Panc1 (cell line): ENCODE measurements at regions of chr12 and their contacts with region 1.

Region 1: GRCh38 chr12:53852061-53852460 is 86.6 kb upstream of the HOXC13 start:
- DNase-seq: no peak
- ATAC-seq: no peak
- H3K4me3 ChIP-seq: no peak overlapping the region
- H3K27ac ChIP-seq: peak overlapping the region; percentile 61; the same call in 1 of the 2 replicates
- H3K4me1 ChIP-seq: peaks cover 11% of the 10 kb centered on the region
- H3K27me3 ChIP-seq: no peaks in the 10 kb centered on the region
- CTCF ChIP-seq: no peak

Region 2: GRCh38 chr12:53907103-53907502 is 55.0 kb after region 1 on chr12:
- CTCF ChIA-PET with region 1: no interaction called
- POLR2A ChIA-PET with region 1: interaction called, 18 read pairs
- in situ Hi-C with region 1: no loop called
- intact Hi-C with region 1: no loop called
- DNase-seq: no peak
- ATAC-seq: no peak
- H3K4me3 ChIP-seq: no peak overlapping the region
- H3K27ac ChIP-seq: peak overlapping the region; percentile 46
- H3K4me1 ChIP-seq: no peaks in the 10 kb centered on the region
- H3K27me3 ChIP-seq: no peaks in the 10 kb centered on the region
- CTCF ChIP-seq: no peak

Region 3: DNA sequence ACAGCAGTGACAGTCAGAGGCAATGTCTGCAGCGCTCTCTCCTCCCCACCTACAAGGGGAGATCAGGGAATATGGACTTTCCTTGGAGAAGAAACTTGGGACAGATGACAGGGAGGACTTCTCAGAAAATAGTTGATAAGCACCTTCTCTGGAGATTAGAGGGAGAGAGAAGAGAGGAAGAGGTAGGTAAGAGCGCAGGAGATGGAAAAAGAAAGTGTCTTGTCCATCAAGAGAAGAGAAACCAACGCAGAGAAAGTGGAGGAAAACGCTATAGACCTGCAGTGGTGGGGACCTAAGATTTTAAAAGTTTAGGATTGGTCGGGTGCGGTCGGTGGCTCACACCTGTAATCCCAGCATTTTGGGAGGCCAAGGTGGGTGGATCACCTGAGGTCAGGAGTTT is 352.3 kb after region 1 on chr12:
- CTCF ChIA-PET with region 1: no interaction called
- POLR2A ChIA-PET with region 1: no interaction called
- in situ Hi-C with region 1: no loop called
- intact Hi-C with region 1: no loop called
- DNase-seq: no peak
- ATAC-seq: no peak
- H3K4me3 ChIP-seq: no peak overlapping the region
- H3K27ac ChIP-seq: no peak overlapping the region
- H3K4me1 ChIP-seq: peaks cover 14% of the 10 kb centered on the region
- H3K27me3 ChIP-seq: no peaks in the 10 kb centered on the region
- CTCF ChIP-seq: no peak